HCT116 (cell line): ENCODE measurements at regions of chr1 and their contacts with region 1.

Region 1: GRCh38 chr1:19485362-19486187 is at the start of gene CAPZB:
- DNase-seq: peak; percentile 48
- ATAC-seq: peak; percentile 92
- H3K4me3 ChIP-seq: peak within 1 kb of the TSS; percentile 92 to 97
- H3K27ac ChIP-seq: peak within 1 kb of the TSS; percentile 87
- H3K4me1 ChIP-seq: peaks cover 11 to 23% of the 10 kb centered on the region in 2 experiments; a peak in 3 of 4 replicates
- H3K27me3 ChIP-seq: no peaks in the 10 kb centered on the region
- CTCF ChIP-seq: no peak
- POLR2A ChIP-seq: peak; percentile 43
- RAD21 ChIP-seq: no peak
- total RNA-seq, gene CAPZB: 203 TPM

Region 2: GRCh38 chr1:19341201-19342072 is 144.1 kb before region 1 on chr1:
- CTCF ChIA-PET with region 1: no interaction called
- POLR2A ChIA-PET with region 1: no interaction called
- RAD21 ChIA-PET with region 1: no interaction called
- intact Hi-C with region 1: loop called (anchors 5 kb)
- DNase-seq: peak; percentile 62
- ATAC-seq: peak; percentile 81
- H3K4me3 ChIP-seq: no peak overlapping the region
- H3K27ac ChIP-seq: no peak overlapping the region
- H3K4me1 ChIP-seq: peaks cover 25 to 30% of the 10 kb centered on the region in 2 experiments
- H3K27me3 ChIP-seq: no peaks in the 10 kb centered on the region
- CTCF ChIP-seq: peak; percentile 32 to 94 (median 87); a peak in 5 of 6 replicates
- POLR2A ChIP-seq: no peak
- RAD21 ChIP-seq: peak; percentile 53

Region 3: DNA sequence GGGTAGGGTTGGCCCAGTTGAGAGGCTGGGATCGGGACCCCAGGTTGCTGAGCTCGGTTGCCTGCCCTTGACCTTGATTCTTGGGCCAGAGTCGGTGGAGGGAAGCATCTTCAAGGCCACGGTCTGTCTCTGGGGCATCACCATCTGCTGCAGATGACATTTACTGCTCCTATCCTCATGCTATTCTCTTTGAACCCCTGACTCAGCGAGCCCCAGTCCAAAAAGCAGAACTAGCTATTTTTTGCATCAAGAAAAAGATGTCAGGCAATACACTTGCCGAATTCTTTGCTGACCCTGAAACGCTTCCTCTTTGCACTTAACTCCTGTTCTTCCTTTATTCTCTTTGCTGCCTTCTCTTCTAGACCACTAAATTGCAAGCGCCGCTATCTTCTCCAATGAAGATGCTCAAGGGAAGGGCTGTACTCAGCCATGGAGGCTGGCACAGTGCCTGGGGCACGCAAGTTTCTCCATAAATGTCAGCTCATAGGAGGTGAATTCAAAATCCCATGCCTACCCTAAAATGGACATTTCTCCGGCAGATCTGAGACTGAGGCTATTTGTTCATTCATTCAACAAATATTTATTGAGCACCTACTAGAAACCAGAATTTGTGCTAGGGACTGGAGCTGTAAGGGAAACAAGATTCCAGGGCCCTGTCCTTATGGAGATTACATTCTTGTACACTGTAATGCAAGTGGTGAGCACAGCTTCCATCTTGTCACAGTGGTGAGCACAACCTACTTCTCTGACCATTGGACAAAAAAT is 20.3 kb after region 1 on chr1:
- CTCF ChIA-PET with region 1: no interaction called
- POLR2A ChIA-PET with region 1: no interaction called
- RAD21 ChIA-PET with region 1: no interaction called
- intact Hi-C with region 1: no loop called
- DNase-seq: no peak
- ATAC-seq: no peak
- H3K4me3 ChIP-seq: no peak overlapping the region
- H3K27ac ChIP-seq: no peak overlapping the region
- H3K4me1 ChIP-seq: no peaks in the 10 kb centered on the region; a peak in 1 of 4 replicates
- H3K27me3 ChIP-seq: no peaks in the 10 kb centered on the region
- CTCF ChIP-seq: no peak
- POLR2A ChIP-seq: no peak
- RAD21 ChIP-seq: no peak

Region 4: GRCh38 chr1:19596714-19597495 is 111.3 kb after region 1 on chr1:
- CTCF ChIA-PET with region 1: no interaction called
- POLR2A ChIA-PET with region 1: no interaction called
- RAD21 ChIA-PET with region 1: no interaction called
- intact Hi-C with region 1: loop called (anchors 5 kb)
- DNase-seq: peak; percentile 96
- ATAC-seq: peak; percentile 94
- H3K4me3 ChIP-seq: peak overlapping the region; percentile 89 to 94
- H3K27ac ChIP-seq: peak overlapping the region; percentile 80
- H3K4me1 ChIP-seq: peaks cover 3 to 21% of the 10 kb centered on the region in 2 experiments; a peak in 3 of 4 replicates
- H3K27me3 ChIP-seq: no peaks in the 10 kb centered on the region
- CTCF ChIP-seq: no peak
- POLR2A ChIP-seq: peak; percentile 45
- RAD21 ChIP-seq: no peak